ENCODE measurements at regions of chr6 and their contacts with region 1.

Region 1: DNA sequence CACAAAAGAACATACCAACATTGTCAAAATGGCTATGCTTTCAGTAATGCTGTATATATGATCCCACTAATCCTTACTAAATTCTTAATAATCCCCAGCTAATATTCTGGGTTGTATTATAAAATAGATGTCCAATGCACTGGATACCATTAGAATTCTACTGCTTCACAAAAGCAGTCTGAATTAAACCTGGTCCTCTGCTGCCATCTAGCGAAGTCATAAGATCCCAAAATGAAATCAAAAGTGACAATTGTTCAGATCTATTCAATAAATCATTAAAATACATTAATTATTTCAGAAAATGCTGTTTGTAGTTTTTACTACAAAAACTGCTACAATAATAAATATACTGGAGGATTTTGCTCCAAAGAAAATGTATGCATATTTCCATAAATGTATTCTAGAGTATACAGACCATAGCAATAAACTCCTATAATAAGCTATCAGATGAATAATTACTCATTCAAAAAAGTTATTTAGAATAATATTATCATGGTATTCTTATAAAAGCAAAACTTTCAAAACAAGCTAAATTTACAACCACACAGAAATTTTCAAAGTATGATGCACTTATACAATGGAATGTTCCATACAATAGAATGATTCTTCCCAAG is 92.6 kb downstream of the RNGTT start:
- DNase-seq: peak; percentile 63
- H3K4me3 Mint-ChIP-seq: no peak overlapping the region
- H3K27ac Mint-ChIP-seq: no peak overlapping the region
- H3K4me1 Mint-ChIP-seq: peaks cover 33% of the 10 kb centered on the region
- H3K27me3 Mint-ChIP-seq: no peaks in the 10 kb centered on the region

Region 2: DNA sequence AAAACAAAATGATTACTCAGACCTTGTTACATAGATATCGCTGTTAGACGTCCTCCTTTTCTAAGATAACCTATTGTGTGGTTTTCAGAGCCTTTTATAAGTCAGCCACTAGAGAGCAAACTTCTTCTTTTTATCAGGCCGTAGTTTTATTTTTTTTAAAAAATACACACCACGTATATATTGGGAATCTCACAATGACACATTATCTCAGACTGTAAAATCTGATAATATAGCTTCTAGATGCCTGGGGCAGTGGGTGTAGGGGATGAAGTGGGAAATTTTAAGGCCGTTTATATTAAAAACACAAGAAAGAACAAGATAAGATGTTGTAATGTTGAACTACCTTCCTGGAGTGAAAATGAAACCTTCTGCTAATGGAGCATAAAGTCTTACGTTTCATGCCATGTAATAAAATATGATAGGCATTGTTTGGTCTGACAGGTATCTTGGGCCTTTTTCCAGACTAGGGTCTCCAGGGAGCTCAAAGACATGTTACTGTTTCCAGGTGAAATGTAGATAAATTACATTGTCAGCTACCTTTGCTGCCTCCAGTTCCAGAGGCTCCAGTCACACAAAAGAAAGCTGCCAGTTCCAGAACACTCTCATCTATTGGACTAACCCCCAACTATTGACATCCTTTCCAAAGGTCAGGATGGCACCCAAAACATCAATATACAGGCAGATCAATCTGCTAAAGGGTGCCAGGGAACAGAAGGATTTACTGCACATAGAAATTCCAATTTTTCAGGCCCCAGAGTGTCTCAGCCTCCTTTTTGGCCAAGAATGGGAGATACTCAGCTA is 1038.6 kb before region 1 on chr6:
- CTCF ChIA-PET with region 1: interaction called, 5 read pairs
- intact Hi-C with region 1: loop called (anchors 1 kb)
- DNase-seq: no peak
- H3K4me3 Mint-ChIP-seq: peak overlapping the region; percentile 69
- H3K27ac Mint-ChIP-seq: peak overlapping the region; percentile 72
- H3K4me1 Mint-ChIP-seq: peaks cover 8% of the 10 kb centered on the region
- H3K27me3 Mint-ChIP-seq: no peaks in the 10 kb centered on the region

Region 3: GRCh38 chr6:88165844-88166492 is 704.9 kb before region 1 on chr6 and contains the start of gene CNR1:
- CTCF ChIA-PET with region 1: no interaction called
- intact Hi-C with region 1: loop called (anchors 5 kb)
- DNase-seq: no peak
- H3K4me3 Mint-ChIP-seq: peak within 1 kb of the TSS; percentile 74
- H3K27ac Mint-ChIP-seq: no peak within 1 kb of the TSS
- H3K4me1 Mint-ChIP-seq: peaks cover 12% of the 10 kb centered on the region
- H3K27me3 Mint-ChIP-seq: peaks cover 55% of the 10 kb centered on the region
- total RNA-seq, gene CNR1: not detected

Region 4: GRCh38 chr6:88804701-88805100 is 66.1 kb before region 1 on chr6:
- CTCF ChIA-PET with region 1: no interaction called
- intact Hi-C with region 1: no loop called
- DNase-seq: no peak
- H3K4me3 Mint-ChIP-seq: no peak overlapping the region
- H3K27ac Mint-ChIP-seq: no peak overlapping the region
- H3K4me1 Mint-ChIP-seq: peaks cover 12% of the 10 kb centered on the region
- H3K27me3 Mint-ChIP-seq: no peaks in the 10 kb centered on the region

Region 5: GRCh38 chr6:88855541-88856147 is 15.2 kb before region 1 on chr6:
- CTCF ChIA-PET with region 1: interaction called, 35 read pairs
- intact Hi-C with region 1: no loop called
- DNase-seq: no peak
- H3K4me3 Mint-ChIP-seq: no peak overlapping the region
- H3K27ac Mint-ChIP-seq: no peak overlapping the region
- H3K4me1 Mint-ChIP-seq: no peaks in the 10 kb centered on the region
- H3K27me3 Mint-ChIP-seq: no peaks in the 10 kb centered on the region

Region 6: GRCh38 chr6:88890860-88891845 is 20.3 kb after region 1 on chr6:
- CTCF ChIA-PET with region 1: no interaction called
- intact Hi-C with region 1: no loop called
- DNase-seq: no peak
- H3K4me3 Mint-ChIP-seq: no peak overlapping the region
- H3K27ac Mint-ChIP-seq: no peak overlapping the region
- H3K4me1 Mint-ChIP-seq: peaks cover 4% of the 10 kb centered on the region
- H3K27me3 Mint-ChIP-seq: no peaks in the 10 kb centered on the region

Measured in activated naive CD4-positive, alpha-beta T cell treated with anti-CD3 and anti-CD28 coated beads for 36 hours (primary cell).